Heart left ventricle (tissue), 16 donors: ENCODE measurements at regions of chr13 and their contacts with region 1.

Region 1: DNA sequence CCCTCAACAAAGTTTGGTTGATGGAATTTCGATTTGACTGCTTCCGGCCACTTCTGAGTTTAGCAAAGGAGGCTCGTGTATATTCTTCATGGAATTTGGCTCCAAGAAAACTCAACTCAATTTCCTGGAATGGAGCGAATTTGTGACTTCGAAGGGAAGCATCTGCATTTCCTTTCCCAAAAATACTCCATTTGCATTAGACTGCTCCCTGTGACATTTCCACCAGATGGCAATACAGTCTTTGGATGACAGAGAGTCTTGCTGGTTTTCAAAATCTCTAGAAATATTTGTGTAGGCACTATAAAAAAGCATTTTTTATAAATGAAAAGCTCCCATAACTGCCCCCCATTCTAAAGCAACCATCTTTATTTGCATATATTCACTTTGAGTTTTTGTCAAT is 4.1 kb downstream of the C1QTNF9 start:
- DNase-seq: no peak
- ATAC-seq: no peak
- H3K4me3 ChIP-seq: no peak overlapping the region
- H3K27ac ChIP-seq: no peak overlapping the region
- H3K4me1 ChIP-seq: peaks cover 0 to 15% (median 4%) of the 10 kb centered on the region in 12 donors
- H3K27me3 ChIP-seq: no peaks in the 10 kb centered on the region
- CTCF ChIP-seq: peak in 11 of 12 donors; percentile 20 to 59 (median 41)
- POLR2A ChIP-seq: no peak

Region 2: GRCh38 chr13:24557081-24557480 is 243.6 kb after region 1 on chr13:
- intact Hi-C with region 1: loop called in 1 of 10 experiments (anchors 10 kb)
- DNase-seq: no peak
- ATAC-seq: no peak
- H3K4me3 ChIP-seq: no peak overlapping the region
- H3K27ac ChIP-seq: no peak overlapping the region
- H3K4me1 ChIP-seq: no peaks in the 10 kb centered on the region
- H3K27me3 ChIP-seq: no peaks in the 10 kb centered on the region
- CTCF ChIP-seq: no peak
- POLR2A ChIP-seq: no peak

Region 3: DNA sequence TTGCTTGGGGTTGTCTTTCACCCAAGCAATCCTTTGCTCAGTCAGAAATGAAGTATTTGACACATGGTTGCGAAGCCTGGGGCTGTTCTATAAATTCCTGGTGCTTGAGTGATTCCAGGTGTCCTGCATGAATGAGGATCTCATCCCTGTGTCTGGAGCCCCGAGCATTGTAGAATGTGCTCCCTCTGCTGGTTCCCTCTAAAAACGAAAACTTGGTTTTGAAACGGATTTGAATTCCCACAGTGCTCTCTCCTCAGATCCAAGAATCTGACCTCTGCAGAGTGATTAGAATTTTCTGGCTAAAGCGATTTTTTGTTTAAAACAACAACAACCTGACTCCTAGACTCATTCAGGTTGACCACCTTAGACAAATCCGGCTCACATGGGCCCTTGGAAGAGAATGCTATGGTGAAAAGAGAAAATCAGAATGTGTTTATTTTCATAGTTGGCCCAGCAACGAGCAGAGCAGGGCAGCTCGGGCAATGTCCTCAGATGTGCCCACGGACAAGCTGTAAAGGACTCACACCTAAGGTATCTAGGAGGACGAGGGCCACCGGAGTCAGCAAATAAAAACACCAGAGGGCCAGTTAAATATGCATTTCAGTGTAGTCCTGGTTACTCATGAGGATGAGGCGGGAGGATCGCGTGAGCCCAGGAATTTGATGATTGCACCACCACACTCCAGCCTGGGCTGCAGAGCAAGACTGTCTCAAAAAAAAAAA is 358.1 kb after region 1 on chr13:
- intact Hi-C with region 1: loop called in 1 of 10 experiments (anchors 10 kb)
- DNase-seq: no peak
- ATAC-seq: peak; percentile 49 to 79 (median 66)
- H3K4me3 ChIP-seq: peak overlapping the region in 5 of 12 donors; percentile 8 to 30 (median 23)
- H3K27ac ChIP-seq: peak overlapping the region in 1 of 12 donors; percentile 44
- H3K4me1 ChIP-seq: peaks cover 0 to 11% (median 0%) of the 10 kb centered on the region in 12 donors
- H3K27me3 ChIP-seq: peaks cover 0 to 18% (median 0%) of the 10 kb centered on the region in 9 donors
- CTCF ChIP-seq: peak; percentile 29 to 70 (median 54)
- POLR2A ChIP-seq: no peak